ENCODE measurements at regions of chr22 and their contacts with region 1.

Region 1: GRCh38 chr22:36144886-36145541 is 15.5 kb downstream of the APOL3 start:
- DNase-seq: peak; percentile 77
- H3K4me3 ChIP-seq: no peak overlapping the region
- H3K27ac ChIP-seq: no peak overlapping the region
- H3K4me1 ChIP-seq: peaks cover 17% of the 10 kb centered on the region
- H3K27me3 ChIP-seq: no peaks in the 10 kb centered on the region
- CTCF ChIP-seq: peak; percentile 55 to 75 (median 66)
- POLR2A ChIP-seq: no peak

Region 2: DNA sequence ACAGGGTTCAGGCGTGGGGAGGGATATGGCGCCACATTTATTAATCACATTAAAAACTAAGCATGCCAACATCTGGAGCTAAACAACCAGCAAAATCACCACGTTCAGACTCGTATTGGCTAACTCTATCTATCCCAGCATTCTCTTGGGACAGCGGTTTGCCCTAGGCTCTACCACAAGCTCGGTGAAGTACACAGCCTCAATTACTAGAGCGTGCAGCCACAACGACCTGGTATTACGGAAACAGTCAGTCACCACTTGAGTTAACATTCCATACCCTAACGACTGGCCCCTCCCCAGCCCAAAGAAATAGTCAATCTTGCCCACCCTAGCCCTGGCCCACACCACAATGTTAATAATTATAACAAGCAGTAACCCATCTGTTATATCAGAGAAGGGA is 395.2 kb before region 1 on chr22:
- intact Hi-C with region 1: no loop called
- DNase-seq: no peak
- H3K4me3 ChIP-seq: no peak overlapping the region
- H3K27ac ChIP-seq: no peak overlapping the region
- H3K4me1 ChIP-seq: no peaks in the 10 kb centered on the region
- H3K27me3 ChIP-seq: no peaks in the 10 kb centered on the region
- CTCF ChIP-seq: no peak
- POLR2A ChIP-seq: no peak

Region 3: GRCh38 chr22:36017651-36018091 is 127.3 kb before region 1 on chr22:
- intact Hi-C with region 1: no loop called
- DNase-seq: no peak
- H3K4me3 ChIP-seq: no peak overlapping the region
- H3K27ac ChIP-seq: no peak overlapping the region
- H3K4me1 ChIP-seq: peaks cover 12% of the 10 kb centered on the region
- H3K27me3 ChIP-seq: no peaks in the 10 kb centered on the region
- CTCF ChIP-seq: no peak
- POLR2A ChIP-seq: no peak

Region 4: GRCh38 chr22:36180038-36180880 is 35.2 kb after region 1 on chr22:
- intact Hi-C with region 1: loop called (anchors 5 kb)
- DNase-seq: peak; percentile 93
- H3K4me3 ChIP-seq: no peak overlapping the region
- H3K27ac ChIP-seq: no peak overlapping the region
- H3K4me1 ChIP-seq: no peaks in the 10 kb centered on the region
- H3K27me3 ChIP-seq: no peaks in the 10 kb centered on the region
- CTCF ChIP-seq: peak; percentile 77 to 92 (median 83)
- POLR2A ChIP-seq: no peak

Region 5: GRCh38 chr22:36334709-36335620 is 190.0 kb after region 1 on chr22:
- intact Hi-C with region 1: no loop called
- DNase-seq: no peak
- H3K4me3 ChIP-seq: no peak overlapping the region
- H3K27ac ChIP-seq: peak overlapping the region; percentile 3 to 42
- H3K4me1 ChIP-seq: peaks cover 63% of the 10 kb centered on the region
- H3K27me3 ChIP-seq: no peaks in the 10 kb centered on the region
- CTCF ChIP-seq: no peak
- POLR2A ChIP-seq: no peak